ENCODE measurements at regions of chr14 and their contacts with region 1.

Region 1: DNA sequence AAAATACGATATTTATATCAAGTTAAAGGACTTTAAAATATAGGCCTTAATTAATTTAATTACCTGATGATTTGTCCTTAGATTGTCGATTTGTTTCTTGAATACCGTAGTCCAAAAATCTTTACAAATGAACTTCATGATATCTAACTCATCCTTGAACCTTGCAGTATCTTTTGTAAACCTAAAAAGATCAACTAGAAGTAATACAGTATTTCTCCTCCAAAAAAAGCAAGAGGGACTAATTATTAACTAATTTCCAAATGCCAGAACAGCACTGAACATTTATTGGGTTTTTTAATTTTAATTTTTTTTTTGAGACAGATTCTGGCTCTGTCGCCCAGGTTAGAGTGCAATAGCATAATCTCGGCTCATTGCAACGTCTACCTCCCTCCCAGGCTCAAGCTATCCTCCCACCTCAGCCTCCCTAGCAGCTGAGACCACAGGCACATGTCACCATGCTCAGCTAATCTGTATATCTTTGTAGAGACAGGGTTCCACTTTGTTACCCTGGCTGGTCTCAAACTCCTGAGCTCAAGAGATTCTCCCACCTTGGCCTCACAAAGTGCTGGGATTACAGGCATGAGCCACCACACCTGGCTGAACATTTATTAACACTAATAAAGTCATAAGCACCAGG is 11.8 kb downstream of the TRAPPC6B start:
- DNase-seq: no peak
- H3K4me3 ChIP-seq: no peak overlapping the region
- H3K27ac ChIP-seq: no peak overlapping the region
- H3K4me1 ChIP-seq: no peaks in the 10 kb centered on the region
- H3K27me3 ChIP-seq: no peaks in the 10 kb centered on the region
- CTCF ChIP-seq: no peak

Region 2: DNA sequence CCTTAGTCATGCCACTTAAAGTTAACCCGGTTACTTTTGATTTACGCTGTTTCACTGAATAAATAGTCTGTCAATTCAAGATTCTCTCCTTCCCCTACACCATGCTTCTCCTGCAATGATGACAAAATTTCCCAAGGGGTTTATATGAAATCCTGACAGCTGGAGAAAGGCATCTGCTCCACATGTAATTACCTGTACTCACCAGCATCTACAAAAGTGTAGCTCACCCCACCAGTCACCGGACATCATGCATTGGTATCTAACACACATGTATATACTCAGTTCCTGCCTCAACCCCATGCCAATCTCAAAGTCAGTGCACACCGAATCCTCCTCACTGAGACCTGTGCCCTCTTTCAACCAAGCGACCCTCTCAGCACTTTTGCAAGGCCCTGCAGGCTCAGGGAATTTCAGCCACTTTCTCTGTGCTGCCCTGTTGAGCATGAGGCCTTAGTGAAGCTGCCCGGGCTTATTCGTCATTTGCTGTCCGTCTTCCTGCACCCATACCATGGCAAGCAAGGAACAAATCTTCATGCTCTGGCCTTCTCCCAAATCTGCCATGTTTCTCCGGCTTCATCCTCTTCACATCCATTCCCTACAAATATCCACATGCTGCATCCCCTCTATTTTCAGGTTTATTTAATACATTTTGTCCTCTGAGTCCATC is 187.0 kb before region 1 on chr14:
- CTCF ChIA-PET with region 1: no interaction called
- dilution Hi-C with region 1: no loop called
- in situ Hi-C with region 1: no loop called
- intact Hi-C with region 1: no loop called
- DNase-seq: no peak
- H3K4me3 ChIP-seq: no peak overlapping the region
- H3K27ac ChIP-seq: no peak overlapping the region
- H3K4me1 ChIP-seq: no peaks in the 10 kb centered on the region
- H3K27me3 ChIP-seq: no peaks in the 10 kb centered on the region
- CTCF ChIP-seq: no peak

Region 3: GRCh38 chr14:39140170-39140569 is 18.2 kb before region 1 on chr14:
- CTCF ChIA-PET with region 1: interaction called, 11 read pairs
- dilution Hi-C with region 1: no loop called
- in situ Hi-C with region 1: no loop called
- intact Hi-C with region 1: no loop called
- DNase-seq: no peak
- H3K4me3 ChIP-seq: no peak overlapping the region
- H3K27ac ChIP-seq: no peak overlapping the region
- H3K4me1 ChIP-seq: no peaks in the 10 kb centered on the region
- H3K27me3 ChIP-seq: no peaks in the 10 kb centered on the region
- CTCF ChIP-seq: no peak

Region 4: DNA sequence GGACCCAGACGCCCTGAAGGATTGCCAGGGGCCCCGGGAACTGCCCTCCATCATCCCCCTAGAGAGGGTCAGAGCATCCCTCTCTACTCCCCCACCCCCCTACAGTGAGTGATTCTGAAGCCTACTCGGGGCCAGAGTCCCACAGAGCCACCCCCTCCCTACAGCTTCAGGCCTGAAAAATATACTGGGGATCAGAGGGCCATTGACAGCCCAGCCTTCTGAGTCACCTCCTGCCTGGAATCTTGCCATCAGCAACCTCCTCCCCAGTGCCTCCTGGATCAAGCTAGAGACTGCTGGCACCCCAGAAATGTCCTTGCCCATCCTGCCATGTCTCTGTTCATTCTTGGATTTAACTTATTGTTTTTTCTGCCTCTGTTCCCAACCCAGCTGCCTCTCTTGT is 53.7 kb after region 1 on chr14:
- CTCF ChIA-PET with region 1: no interaction called
- dilution Hi-C with region 1: no loop called
- in situ Hi-C with region 1: no loop called
- intact Hi-C with region 1: no loop called
- DNase-seq: peak; percentile 21
- H3K4me3 ChIP-seq: no peak overlapping the region
- H3K27ac ChIP-seq: no peak overlapping the region
- H3K4me1 ChIP-seq: no peaks in the 10 kb centered on the region
- H3K27me3 ChIP-seq: no peaks in the 10 kb centered on the region
- CTCF ChIP-seq: no peak

Measured in mammary epithelial cell (primary cell).